HEK293 (cell line): ENCODE measurements at regions of chr3 and their contacts with region 1.

Region 1: GRCh38 chr3:124383083-124383482 is 347.2 kb upstream of the UMPS start:
- H3K4me3 ChIP-seq: no peak overlapping the region
- H3K27ac ChIP-seq: no peak overlapping the region
- H3K4me1 ChIP-seq: no peaks in the 10 kb centered on the region
- CTCF ChIP-seq: no peak

Region 2: GRCh38 chr3:124486324-124486723 is 103.2 kb after region 1 on chr3:
- CTCF ChIA-PET with region 1: no interaction called
- POLR2A ChIA-PET with region 1: no interaction called
- H3K4me3 ChIP-seq: no peak overlapping the region
- H3K27ac ChIP-seq: no peak overlapping the region
- H3K4me1 ChIP-seq: no peaks in the 10 kb centered on the region
- CTCF ChIP-seq: no peak

Region 3: GRCh38 chr3:124529826-124530571 is 146.9 kb after region 1 on chr3:
- CTCF ChIA-PET with region 1: no interaction called
- POLR2A ChIA-PET with region 1: no interaction called
- H3K4me3 ChIP-seq: no peak overlapping the region
- H3K27ac ChIP-seq: no peak overlapping the region
- H3K4me1 ChIP-seq: no peaks in the 10 kb centered on the region
- CTCF ChIP-seq: no peak

Region 4: DNA sequence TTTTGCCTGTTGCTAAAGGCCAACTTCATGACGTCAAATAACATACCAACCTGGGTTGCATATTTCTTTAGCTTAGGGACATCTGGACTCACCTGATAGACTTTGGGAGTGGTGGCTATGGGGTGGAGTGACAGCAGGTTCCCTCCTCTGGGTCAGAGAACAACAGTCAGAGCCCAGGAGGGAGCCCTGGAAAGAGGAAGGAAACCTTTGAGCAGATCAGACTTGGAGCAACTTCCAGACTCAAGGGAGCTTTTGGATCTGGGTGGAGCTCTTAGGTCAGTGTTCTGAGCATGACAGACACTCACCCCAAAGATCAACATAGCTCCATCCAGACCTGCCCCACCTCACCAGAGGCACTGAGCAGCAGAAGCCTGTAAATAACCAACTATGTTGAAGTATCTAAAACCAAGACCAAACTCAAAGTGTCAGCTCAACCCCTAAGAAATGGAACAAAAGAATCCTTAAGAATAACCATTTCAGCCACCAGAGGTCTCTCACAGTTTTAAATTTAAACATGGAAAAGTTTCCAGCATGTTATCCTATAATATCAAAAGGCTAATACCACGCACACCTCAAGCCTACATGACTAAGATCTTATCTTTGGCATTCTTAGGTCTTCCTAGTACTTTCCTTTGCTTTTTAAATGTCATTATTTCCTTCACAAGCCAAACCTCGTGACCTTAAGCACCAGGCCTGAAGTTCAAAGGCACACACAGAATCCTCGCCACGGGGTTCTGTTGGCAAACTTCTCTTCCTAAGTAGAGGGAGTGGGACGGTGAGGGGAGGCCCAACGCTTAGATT is 403.6 kb after region 1 on chr3:
- CTCF ChIA-PET with region 1: no interaction called
- POLR2A ChIA-PET with region 1: interaction called, 11 read pairs
- H3K4me3 ChIP-seq: no peak overlapping the region
- H3K27ac ChIP-seq: no peak overlapping the region
- H3K4me1 ChIP-seq: no peaks in the 10 kb centered on the region
- CTCF ChIP-seq: no peak